HCT116 (cell line): ENCODE measurements at regions of chr10 and their contacts with region 1.

Region 1: DNA sequence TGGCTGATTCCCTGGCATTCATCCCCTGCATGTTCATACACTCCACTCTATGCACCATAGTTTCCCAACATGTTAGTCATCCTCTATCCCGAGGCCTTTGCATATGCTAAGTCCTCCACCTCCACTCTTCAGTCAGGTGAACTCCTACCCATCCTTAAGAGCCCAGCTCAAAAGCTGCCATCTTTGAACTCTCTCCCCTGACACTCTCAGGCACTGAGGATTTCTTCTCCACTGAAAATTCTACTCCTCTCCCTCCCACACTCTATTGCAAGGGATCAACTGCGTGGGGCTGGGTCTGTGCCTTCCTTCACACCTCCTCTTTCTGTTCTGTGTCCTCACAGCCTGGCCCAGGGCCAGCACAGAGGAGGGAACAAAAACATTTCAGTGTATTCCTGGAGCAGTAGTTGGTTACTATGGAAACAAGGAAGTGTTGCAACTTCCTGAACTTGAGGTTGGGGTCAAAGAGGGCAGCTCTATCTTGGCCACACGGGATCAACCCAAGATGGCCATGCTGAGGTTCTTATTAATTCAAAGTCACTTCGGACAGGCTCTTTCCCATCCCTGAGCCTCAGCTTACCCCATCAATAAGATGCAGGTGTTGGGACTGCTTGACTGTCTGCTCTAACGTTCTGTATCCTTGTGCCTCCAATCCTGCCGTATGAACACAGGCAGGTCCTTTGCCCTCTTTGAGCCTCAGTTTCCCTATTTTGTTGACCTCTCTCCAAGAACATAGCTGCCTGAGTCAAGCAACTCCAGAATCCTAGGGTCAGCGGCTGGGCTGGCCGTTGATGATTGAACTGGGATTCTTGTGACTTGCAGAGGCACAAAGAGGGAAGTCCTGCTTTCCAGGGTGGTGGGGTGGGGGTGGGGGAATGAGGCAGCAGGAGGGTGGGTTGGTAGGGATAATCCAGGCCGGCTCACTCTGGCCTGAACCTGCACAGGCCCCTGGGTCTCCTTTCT is 15.5 kb downstream of the ZMIZ1 start:
- DNase-seq: no peak
- ATAC-seq: no peak
- H3K4me3 ChIP-seq: no peak overlapping the region
- H3K27ac ChIP-seq: no peak overlapping the region
- H3K4me1 ChIP-seq: peaks cover 43 to 54% of the 10 kb centered on the region in 2 experiments
- H3K27me3 ChIP-seq: no peaks in the 10 kb centered on the region
- CTCF ChIP-seq: no peak
- POLR2A ChIP-seq: no peak
- RAD21 ChIP-seq: no peak

Region 2: GRCh38 chr10:79185067-79185774 is 100.9 kb after region 1 on chr10:
- CTCF ChIA-PET with region 1: no interaction called
- POLR2A ChIA-PET with region 1: no interaction called
- RAD21 ChIA-PET with region 1: no interaction called
- intact Hi-C with region 1: loop called (anchors 5 kb)
- DNase-seq: no peak
- ATAC-seq: no peak
- H3K4me3 ChIP-seq: no peak overlapping the region
- H3K27ac ChIP-seq: no peak overlapping the region
- H3K4me1 ChIP-seq: peaks cover 84 to 100% of the 10 kb centered on the region in 2 experiments
- H3K27me3 ChIP-seq: no peaks in the 10 kb centered on the region
- CTCF ChIP-seq: no peak
- POLR2A ChIP-seq: no peak
- RAD21 ChIP-seq: no peak